A673 (cell line): ENCODE measurements at regions of chr22 and their contacts with region 1.

Region 1: GRCh38 chr22:36129486-36130388 is 30.8 kb downstream of the APOL3 start:
- DNase-seq: no peak
- H3K4me3 ChIP-seq: no peak overlapping the region
- H3K27ac ChIP-seq: no peak overlapping the region
- H3K4me1 ChIP-seq: peaks cover 9% of the 10 kb centered on the region
- H3K27me3 ChIP-seq: no peaks in the 10 kb centered on the region
- CTCF ChIP-seq: no peak

Region 2: DNA sequence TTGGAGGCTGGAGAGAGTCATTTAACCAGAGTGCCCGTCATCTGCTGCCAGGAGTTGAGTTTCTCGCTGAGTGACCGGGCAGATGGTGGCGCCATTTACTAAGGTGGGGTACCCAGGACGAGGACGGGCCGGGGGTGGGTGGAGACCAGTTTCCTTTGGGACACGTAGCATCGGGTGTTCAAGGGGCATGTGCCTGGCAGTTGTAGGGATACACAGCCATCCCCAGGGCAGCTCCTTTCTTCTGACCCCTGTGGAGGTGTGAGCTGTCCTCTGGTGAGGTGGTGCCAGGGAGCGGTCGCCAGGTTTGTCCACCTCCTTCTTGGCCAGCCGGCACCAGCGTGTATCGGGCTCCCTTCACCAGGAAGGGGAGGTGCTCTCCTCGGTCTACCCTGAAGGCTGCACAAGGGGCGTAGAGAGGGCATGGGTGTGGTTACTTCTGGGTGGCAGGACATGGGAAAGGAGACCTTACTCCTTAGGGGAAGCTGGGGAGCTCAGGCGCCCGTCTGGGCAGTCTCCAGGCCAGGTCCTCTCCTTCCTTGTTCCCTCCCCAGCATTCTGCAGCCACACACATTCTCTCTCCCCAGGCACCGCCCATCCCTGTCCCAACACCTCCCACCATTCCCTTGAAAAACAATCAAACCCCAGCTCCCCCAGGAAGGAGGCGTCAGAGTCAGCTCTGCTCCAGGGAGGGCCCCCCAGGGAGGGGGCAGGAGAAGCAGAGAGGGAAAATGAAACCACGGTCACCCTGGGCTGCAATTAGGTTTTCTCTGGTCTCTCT is 502.3 kb before region 1 on chr22:
- CTCF ChIA-PET with region 1: interaction called, 10 read pairs
- POLR2A ChIA-PET with region 1: no interaction called
- intact Hi-C with region 1: loop called (anchors 1 kb)
- DNase-seq: peak; percentile 90
- H3K4me3 ChIP-seq: peak overlapping the region; percentile 49
- H3K27ac ChIP-seq: peak overlapping the region; percentile 45
- H3K4me1 ChIP-seq: peaks cover 18% of the 10 kb centered on the region
- H3K27me3 ChIP-seq: no peaks in the 10 kb centered on the region
- CTCF ChIP-seq: peak; percentile 75

Region 3: DNA sequence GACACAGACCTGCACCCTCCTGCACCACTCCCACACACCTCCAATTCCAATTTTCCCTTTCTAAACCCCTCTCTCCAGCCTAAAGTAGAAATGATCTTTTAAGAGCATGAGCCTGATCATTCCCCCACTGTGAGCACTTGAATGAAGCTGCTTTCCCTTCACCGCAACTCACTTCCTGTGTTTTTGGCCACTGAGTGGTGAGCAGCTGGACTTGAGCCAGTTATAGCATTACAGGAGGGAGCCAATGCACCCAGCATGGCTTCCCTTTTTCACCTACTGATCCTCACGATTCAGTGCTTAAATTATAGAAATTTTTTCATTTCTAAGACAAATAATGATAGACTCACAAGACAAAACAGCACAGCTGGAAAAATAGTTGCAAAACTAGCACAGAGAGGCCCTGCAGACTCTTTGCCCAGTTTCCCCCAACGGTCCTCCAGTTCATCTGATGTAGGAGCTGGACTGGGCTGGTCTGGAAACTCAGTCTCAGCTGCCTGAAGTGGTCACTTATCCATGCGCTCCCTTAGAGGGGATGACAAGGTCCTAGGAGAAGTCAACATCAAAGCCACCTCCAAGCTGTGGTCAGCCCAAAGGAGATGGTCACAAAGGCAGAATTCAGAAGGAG is 81.6 kb after region 1 on chr22:
- CTCF ChIA-PET with region 1: no interaction called
- POLR2A ChIA-PET with region 1: no interaction called
- intact Hi-C with region 1: no loop called
- DNase-seq: peak; percentile 83
- H3K4me3 ChIP-seq: no peak overlapping the region
- H3K27ac ChIP-seq: peak overlapping the region; percentile 39
- H3K4me1 ChIP-seq: peaks cover 15% of the 10 kb centered on the region
- H3K27me3 ChIP-seq: no peaks in the 10 kb centered on the region
- CTCF ChIP-seq: no peak